Activated CD4-positive, alpha-beta T cell treated with anti-CD3 and anti-CD28 coated beads, Interleukin-2, amount 10 ng/mL, durations not matched to agents 24 days and 14 days (primary cell): ENCODE measurements at regions of chr2 and their contacts with region 1.

Region 1: DNA sequence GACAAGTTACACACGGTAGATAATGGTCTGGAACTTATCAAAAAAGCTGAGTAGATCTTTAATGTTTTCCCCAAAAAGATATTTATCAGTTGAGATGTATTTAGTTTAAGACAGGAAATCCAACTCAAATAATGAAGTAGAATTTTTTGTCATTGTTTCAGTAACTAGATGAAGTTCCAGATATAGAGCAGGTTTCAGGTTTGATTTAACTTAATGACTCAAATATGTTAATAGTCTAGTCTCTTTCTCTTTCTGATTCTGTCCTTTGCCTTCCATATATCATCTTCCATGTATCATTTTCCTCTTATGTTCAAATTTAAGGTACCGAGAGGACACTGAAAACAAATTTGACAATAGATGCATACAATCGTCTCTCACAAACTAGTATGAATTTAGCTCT is 23.6 kb upstream of the DOCK10 start:
- DNase-seq: no peak
- H3K4me3 Mint-ChIP-seq: no peak overlapping the region
- H3K27ac Mint-ChIP-seq: no peak overlapping the region
- H3K4me1 Mint-ChIP-seq: peaks cover 22% of the 10 kb centered on the region
- H3K27me3 Mint-ChIP-seq: peaks cover 6% of the 10 kb centered on the region

Region 2: GRCh38 chr2:225052703-225053102 is 13.2 kb before region 1 on chr2:
- intact Hi-C with region 1: loop called (anchors 1 kb)
- DNase-seq: peak; percentile 88
- H3K4me3 Mint-ChIP-seq: peak overlapping the region; percentile 4
- H3K27ac Mint-ChIP-seq: peak overlapping the region; percentile 52
- H3K4me1 Mint-ChIP-seq: peaks cover 48% of the 10 kb centered on the region
- H3K27me3 Mint-ChIP-seq: peaks cover 9% of the 10 kb centered on the region

Region 3: DNA sequence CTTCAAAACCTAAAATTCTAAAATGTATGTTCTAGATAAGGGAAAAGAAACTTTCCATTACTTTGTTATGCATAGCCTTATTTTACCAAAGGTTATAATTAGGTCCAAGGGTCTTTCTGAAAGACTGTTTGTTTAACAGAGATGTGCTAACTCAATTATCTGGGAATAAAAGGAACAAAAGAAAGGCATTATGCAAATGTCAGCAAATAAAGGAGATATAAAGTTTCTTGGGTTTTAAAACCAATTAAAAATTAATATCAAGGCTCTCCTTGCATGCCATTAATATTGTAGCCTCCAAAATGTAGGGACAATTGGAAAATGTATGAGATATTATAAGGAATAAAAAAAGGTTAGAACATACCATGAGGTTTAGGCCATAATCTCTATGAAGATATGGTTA is 64.2 kb after region 1 on chr2:
- intact Hi-C with region 1: no loop called
- DNase-seq: no peak
- H3K4me3 Mint-ChIP-seq: no peak overlapping the region
- H3K27ac Mint-ChIP-seq: no peak overlapping the region
- H3K4me1 Mint-ChIP-seq: no peaks in the 10 kb centered on the region
- H3K27me3 Mint-ChIP-seq: peaks cover 23% of the 10 kb centered on the region